PC-3 (cell line): ENCODE measurements at regions of chr11 and their contacts with region 1.

Region 1: DNA sequence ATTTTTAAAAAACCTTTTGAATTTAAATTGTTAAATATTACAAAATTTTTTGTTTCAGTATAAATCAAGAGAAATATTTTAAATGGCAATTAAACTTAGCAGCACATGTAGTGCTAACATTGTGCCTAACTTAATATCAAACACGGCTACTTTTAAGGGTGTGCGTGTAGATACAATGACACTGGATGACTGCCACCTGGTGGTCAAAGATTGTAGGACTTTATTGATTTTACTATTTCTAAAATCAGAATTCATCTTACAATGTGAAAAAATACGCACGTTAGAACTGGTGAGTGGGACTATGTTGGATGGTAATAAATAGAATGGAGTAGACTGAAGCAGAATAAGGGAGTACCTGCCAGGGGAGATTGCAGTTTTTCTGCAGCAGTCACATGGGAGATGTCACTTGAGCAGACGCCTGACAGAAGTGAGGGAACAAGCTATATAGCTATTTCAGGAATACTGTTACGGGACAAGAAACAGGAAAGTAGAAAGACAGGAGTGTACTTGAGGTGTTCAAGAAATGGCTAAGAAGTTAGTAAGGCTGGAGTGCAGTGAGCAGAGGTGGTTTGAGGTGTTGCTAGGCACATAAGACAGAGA is 52.9 kb downstream of the UVRAG start:
- DNase-seq: peak; percentile 85
- ATAC-seq: peak; percentile 60
- H3K4me3 ChIP-seq: no peak overlapping the region
- H3K27ac ChIP-seq: no peak overlapping the region
- H3K4me1 ChIP-seq: peaks cover 6% of the 10 kb centered on the region
- H3K27me3 ChIP-seq: no peaks in the 10 kb centered on the region
- CTCF ChIP-seq: peak; percentile 94

Region 2: GRCh38 chr11:75689863-75690609 is 177.8 kb before region 1 on chr11:
- CTCF ChIA-PET with region 1: no interaction called
- POLR2A ChIA-PET with region 1: no interaction called
- intact Hi-C with region 1: no loop called
- DNase-seq: peak; percentile 55
- ATAC-seq: peak; percentile 80
- H3K4me3 ChIP-seq: no peak overlapping the region
- H3K27ac ChIP-seq: no peak overlapping the region
- H3K4me1 ChIP-seq: peaks cover 16% of the 10 kb centered on the region
- H3K27me3 ChIP-seq: no peaks in the 10 kb centered on the region; the same call in 1 of the 2 replicates
- CTCF ChIP-seq: no peak

Region 3: GRCh38 chr11:75706260-75706729 is 161.6 kb before region 1 on chr11:
- CTCF ChIA-PET with region 1: no interaction called
- POLR2A ChIA-PET with region 1: no interaction called
- intact Hi-C with region 1: loop called (anchors 5 kb)
- DNase-seq: peak; percentile 81
- ATAC-seq: peak; percentile 99
- H3K4me3 ChIP-seq: no peak overlapping the region
- H3K27ac ChIP-seq: no peak overlapping the region
- H3K4me1 ChIP-seq: no peaks in the 10 kb centered on the region
- H3K27me3 ChIP-seq: no peaks in the 10 kb centered on the region
- CTCF ChIP-seq: peak; percentile 93

Region 4: DNA sequence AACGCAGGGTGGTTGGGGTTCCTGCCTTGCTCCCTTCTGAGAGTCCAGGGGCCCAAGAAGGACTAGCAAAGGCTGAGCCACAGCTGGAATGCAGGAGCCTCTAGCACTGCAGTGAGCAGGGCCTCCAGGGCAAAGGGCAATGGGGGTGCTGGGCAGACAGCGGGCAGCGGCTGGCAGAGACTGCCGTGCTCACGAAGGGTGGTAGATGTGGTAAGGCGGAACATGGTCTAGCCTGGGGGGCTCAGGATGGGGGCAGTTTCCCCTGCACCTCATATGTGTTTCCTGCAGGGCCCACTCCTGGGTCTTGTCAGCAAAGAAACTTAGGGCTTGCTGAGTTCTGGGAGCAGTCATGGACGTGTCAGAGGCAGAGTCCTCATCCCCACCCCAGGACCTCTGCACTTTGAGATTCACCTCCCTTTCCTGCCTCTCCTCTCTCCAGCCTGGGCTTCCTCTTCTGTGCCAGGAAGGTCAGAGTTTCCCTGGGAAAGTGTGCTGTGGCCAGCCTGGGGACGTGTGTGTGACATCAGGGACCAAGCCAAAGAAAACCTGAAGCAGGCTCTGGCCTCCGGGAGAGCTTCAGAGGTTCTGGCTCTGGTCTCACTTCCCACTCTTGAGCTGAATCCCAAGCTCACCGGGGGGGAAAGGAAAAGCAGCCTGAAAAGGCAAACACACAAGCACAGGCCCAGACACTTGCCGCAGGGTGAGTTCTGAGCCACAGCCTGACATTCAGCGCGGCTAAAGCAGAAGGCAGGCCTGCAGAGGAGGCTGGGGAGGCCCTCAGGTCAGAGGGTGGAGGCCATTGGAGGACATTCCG is 145.8 kb before region 1 on chr11:
- CTCF ChIA-PET with region 1: interaction called, 4 read pairs
- POLR2A ChIA-PET with region 1: no interaction called
- intact Hi-C with region 1: loop called (anchors 2 kb)
- DNase-seq: no peak
- ATAC-seq: no peak
- H3K4me3 ChIP-seq: no peak overlapping the region
- H3K27ac ChIP-seq: no peak overlapping the region
- H3K4me1 ChIP-seq: no peaks in the 10 kb centered on the region
- H3K27me3 ChIP-seq: no peaks in the 10 kb centered on the region
- CTCF ChIP-seq: no peak

Region 5: GRCh38 chr11:75802913-75803820 is 64.7 kb before region 1 on chr11:
- CTCF ChIA-PET with region 1: interaction called, 15 read pairs
- POLR2A ChIA-PET with region 1: no interaction called
- intact Hi-C with region 1: loop called (anchors 1 kb)
- DNase-seq: peak; percentile 84
- ATAC-seq: peak; percentile 96
- H3K4me3 ChIP-seq: no peak overlapping the region
- H3K27ac ChIP-seq: no peak overlapping the region
- H3K4me1 ChIP-seq: peaks cover 9% of the 10 kb centered on the region; the same call in 1 of the 2 replicates
- H3K27me3 ChIP-seq: no peaks in the 10 kb centered on the region
- CTCF ChIP-seq: peak; percentile 97

Region 6: DNA sequence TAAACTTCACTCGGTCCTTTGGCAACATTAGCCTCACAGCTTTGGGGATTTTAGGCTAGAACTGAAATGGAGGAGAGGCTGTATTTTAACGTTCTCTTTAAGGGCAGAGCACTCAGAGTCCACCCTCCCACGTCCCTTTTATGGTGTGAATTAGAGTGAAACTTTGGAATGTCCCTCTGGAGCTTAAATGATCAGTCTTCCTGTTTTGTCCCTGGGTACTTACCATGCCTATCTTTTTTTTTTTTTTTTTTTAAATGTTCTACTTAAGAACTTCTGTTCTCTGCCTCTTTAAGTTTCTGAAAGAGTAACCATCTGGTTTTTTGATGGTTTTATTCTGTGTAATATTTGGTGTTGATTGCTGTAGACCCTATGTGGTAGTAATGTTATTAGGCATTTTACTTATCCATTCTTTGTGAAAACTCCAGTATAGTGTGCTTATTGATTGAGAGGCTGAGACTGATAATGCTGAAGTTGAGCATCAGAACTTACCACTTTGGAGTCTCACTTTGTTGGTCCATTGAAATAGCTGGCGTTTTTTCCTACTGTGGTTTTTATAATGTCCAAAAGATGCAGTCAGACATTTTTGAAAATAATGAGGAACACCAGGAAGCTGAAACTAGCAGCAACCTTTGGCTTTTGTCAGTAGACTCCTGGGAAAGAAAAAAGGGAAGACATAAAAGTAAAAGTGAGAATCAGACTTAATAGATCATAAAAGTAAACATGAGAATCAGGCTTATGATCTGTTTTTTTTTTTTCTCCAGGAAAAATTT is 41.2 kb before region 1 on chr11:
- CTCF ChIA-PET with region 1: interaction called, 13 read pairs
- POLR2A ChIA-PET with region 1: interaction called, 3 read pairs
- intact Hi-C with region 1: no loop called
- DNase-seq: no peak
- ATAC-seq: no peak
- H3K4me3 ChIP-seq: no peak overlapping the region
- H3K27ac ChIP-seq: no peak overlapping the region
- H3K4me1 ChIP-seq: no peaks in the 10 kb centered on the region
- H3K27me3 ChIP-seq: no peaks in the 10 kb centered on the region
- CTCF ChIP-seq: no peak

Region 7: GRCh38 chr11:76062733-76063132 is 194.9 kb after region 1 on chr11:
- CTCF ChIA-PET with region 1: no interaction called
- POLR2A ChIA-PET with region 1: no interaction called
- intact Hi-C with region 1: no loop called
- DNase-seq: no peak
- ATAC-seq: no peak
- H3K4me3 ChIP-seq: no peak overlapping the region
- H3K27ac ChIP-seq: no peak overlapping the region
- H3K4me1 ChIP-seq: no peaks in the 10 kb centered on the region
- H3K27me3 ChIP-seq: no peaks in the 10 kb centered on the region
- CTCF ChIP-seq: no peak